ENCODE measurements at regions of chr2 and their contacts with region 1.

Region 1: GRCh38 chr2:213101692-213102460 is 49.5 kb downstream of the IKZF2 start:
- DNase-seq: no peak
- ATAC-seq: no peak
- H3K4me3 Mint-ChIP-seq: no peak overlapping the region
- H3K27ac Mint-ChIP-seq: no peak overlapping the region
- H3K4me1 Mint-ChIP-seq: peaks cover 38% of the 10 kb centered on the region
- H3K27me3 Mint-ChIP-seq: no peaks in the 10 kb centered on the region
- CTCF ChIP-seq: no peak

Region 2: DNA sequence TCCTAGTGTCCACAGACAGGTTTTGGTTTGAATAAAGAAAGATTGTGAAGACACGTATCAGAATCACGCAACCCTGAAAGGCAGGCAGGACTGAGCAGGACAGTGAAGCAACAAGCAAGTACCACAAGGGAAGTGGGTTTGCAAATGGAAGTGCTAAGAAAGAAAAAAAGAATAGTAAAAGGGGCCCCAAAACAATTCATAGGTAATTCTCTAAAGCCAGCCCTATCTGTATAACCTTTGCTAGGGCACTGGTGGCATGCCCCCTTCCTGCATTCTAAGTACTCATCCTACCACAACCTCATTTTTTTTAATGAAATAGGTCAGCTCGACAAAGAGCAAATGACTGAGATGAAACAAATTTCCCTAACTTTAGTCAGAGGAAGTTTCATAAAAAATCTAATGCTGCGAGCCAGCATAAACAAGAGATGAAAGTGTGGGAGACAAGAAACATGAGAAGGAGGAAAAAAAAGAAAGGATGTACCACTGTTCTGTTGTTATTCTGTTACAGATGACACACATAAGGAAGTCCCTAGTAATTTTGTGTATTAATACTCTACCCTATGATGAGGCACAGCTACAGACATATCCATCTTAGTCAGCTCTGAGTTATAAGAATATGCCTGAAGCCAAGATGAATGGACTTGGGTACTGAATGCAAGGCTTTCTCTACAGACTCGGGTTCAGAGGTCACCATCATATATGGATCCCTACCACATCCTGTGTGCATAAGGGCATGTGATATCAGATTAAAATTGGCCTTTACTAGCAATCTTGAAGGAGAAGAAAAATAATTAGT is 17.4 kb after region 1 on chr2:
- CTCF ChIA-PET with region 1: no interaction called
- POLR2A ChIA-PET with region 1: no interaction called
- intact Hi-C with region 1: loop called (anchors 2 kb)
- DNase-seq: no peak
- ATAC-seq: peak; percentile 60
- H3K4me3 Mint-ChIP-seq: peak overlapping the region; percentile 64
- H3K27ac Mint-ChIP-seq: peak overlapping the region; percentile 57
- H3K4me1 Mint-ChIP-seq: peaks cover 38% of the 10 kb centered on the region
- H3K27me3 Mint-ChIP-seq: no peaks in the 10 kb centered on the region
- CTCF ChIP-seq: no peak